Psoas muscle (tissue), 8 donors: ENCODE measurements at regions of chr1 and their contacts with region 1.

Region 1: DNA sequence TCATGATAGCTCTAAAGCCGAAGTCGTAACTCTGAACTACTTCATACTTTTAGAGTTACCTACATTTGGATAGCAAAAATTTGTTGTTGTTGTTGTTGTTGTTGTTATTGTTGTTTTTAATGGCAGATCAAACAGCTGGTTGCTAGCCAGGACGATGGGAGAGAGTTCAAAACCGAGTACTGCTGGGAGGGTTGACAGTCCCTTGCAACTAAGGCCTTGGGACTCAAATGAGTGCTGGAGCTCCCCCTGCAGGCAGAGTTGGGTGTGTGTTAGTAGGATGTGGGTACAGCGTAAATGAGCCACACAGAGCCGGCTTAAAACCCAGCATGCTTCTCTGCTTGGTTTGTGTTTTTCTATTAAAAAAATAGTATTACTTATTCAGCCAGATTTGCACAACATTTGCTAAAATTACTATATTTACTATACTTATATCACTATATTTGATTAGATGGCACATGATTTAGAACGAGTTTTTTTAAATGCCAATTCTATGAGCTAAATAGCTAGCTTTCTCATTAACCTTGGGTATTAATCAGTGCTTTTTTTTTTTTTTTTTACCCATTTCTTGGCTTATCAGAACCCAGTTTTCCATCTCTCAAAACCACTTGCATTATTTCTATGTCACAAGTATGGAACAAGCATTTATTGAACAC is 129.2 kb upstream of the SYT6 start:
- DNase-seq: peak; percentile 88 to 94
- ATAC-seq: peak; percentile 95 to 100 (median 98)
- H3K4me3 ChIP-seq: no peak overlapping the region
- H3K27ac ChIP-seq: no peak overlapping the region
- H3K4me1 ChIP-seq: no peaks in the 10 kb centered on the region
- H3K27me3 ChIP-seq: no peaks in the 10 kb centered on the region
- CTCF ChIP-seq: peak; percentile 86

Region 2: GRCh38 chr1:113830039-113830438 is 452.8 kb before region 1 on chr1:
- intact Hi-C with region 1: loop called (anchors 5 kb)
- DNase-seq: no peak
- ATAC-seq: no peak
- H3K4me3 ChIP-seq: no peak overlapping the region
- H3K27ac ChIP-seq: no peak overlapping the region
- H3K4me1 ChIP-seq: no peaks in the 10 kb centered on the region
- H3K27me3 ChIP-seq: no peaks in the 10 kb centered on the region
- CTCF ChIP-seq: no peak

Region 3: DNA sequence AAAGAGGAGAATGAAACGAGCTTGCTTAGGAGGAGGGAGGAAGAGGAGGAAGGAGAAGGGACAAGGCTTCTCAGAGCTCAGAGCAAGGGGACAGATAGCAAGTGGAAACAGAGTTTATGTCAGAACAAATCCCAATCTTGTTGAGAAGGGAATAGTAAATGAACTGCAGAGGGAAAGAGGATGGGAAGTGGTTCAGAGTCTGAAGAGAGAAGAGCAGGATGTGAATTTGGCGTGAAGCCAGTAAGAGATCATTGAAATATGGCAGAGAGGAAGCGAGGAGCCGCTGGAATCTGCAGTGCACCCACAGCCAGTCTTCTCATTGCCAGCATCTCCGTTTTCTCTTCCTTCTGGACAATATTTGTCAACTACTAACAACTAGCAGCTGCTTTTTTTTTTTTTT is 284.6 kb before region 1 on chr1:
- intact Hi-C with region 1: no loop called
- DNase-seq: no peak
- ATAC-seq: peak in 1 of 4 donors; percentile 36
- H3K4me3 ChIP-seq: no peak overlapping the region
- H3K27ac ChIP-seq: no peak overlapping the region
- H3K4me1 ChIP-seq: peaks cover 3% of the 10 kb centered on the region
- H3K27me3 ChIP-seq: no peaks in the 10 kb centered on the region
- CTCF ChIP-seq: no peak

Region 4: GRCh38 chr1:114336360-114336759 is 53.5 kb after region 1 on chr1:
- intact Hi-C with region 1: no loop called
- DNase-seq: no peak
- ATAC-seq: no peak
- H3K4me3 ChIP-seq: no peak overlapping the region
- H3K27ac ChIP-seq: no peak overlapping the region
- H3K4me1 ChIP-seq: no peaks in the 10 kb centered on the region
- H3K27me3 ChIP-seq: peaks cover 0 to 4% (median 0%) of the 10 kb centered on the region in 3 donors
- CTCF ChIP-seq: no peak

Region 5: GRCh38 chr1:114346480-114347029 is 63.7 kb after region 1 on chr1:
- intact Hi-C with region 1: no loop called
- DNase-seq: peak; percentile 94 to 98
- ATAC-seq: peak; percentile 99 to 100 (median 100)
- H3K4me3 ChIP-seq: peak overlapping the region; percentile 71
- H3K27ac ChIP-seq: peak overlapping the region; percentile 54
- H3K4me1 ChIP-seq: peaks cover 9% of the 10 kb centered on the region
- H3K27me3 ChIP-seq: no peaks in the 10 kb centered on the region
- CTCF ChIP-seq: peak; percentile 100